CD8-positive, alpha-beta T cell (primary cell): ENCODE measurements at regions of chr6 and their contacts with region 1.

Region 1: GRCh38 chr6:149761438-149761837 is 11.9 kb downstream of the PCMT1 start:
- DNase-seq: no peak
- ATAC-seq: no peak
- H3K4me3 ChIP-seq: no peak overlapping the region
- H3K4me3 Mint-ChIP-seq: no peak overlapping the region
- H3K27ac ChIP-seq: no peak overlapping the region
- H3K27ac Mint-ChIP-seq: no peak overlapping the region
- H3K4me1 ChIP-seq: no peaks in the 10 kb centered on the region
- H3K4me1 Mint-ChIP-seq: peaks cover 27% of the 10 kb centered on the region
- H3K27me3 ChIP-seq: no peaks in the 10 kb centered on the region
- H3K27me3 Mint-ChIP-seq: no peaks in the 10 kb centered on the region
- CTCF ChIP-seq: no peak

Region 2: DNA sequence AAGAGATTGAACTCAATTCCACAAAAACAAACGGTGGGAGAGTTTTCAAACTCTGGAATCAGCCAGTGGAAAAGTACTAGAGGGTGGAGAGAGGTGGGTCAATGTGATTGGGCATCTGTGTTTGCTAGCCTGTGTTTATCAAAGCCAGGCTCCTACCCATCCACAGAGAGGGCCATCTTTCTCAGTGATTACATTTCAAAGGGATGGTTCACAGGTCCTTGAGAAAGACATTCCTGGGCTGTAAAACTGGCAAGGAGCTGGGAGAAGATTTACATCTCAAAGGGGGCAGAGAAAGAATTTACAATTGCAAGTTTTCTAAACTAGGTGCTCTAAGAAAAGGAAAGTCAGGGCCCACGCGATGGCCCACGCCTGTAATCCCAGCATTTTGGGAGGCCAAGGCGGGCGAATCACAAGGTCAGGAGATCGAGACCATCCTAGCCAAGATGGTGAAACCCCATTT is 1161.4 kb before region 1 on chr6:
- CTCF ChIA-PET with region 1: no interaction called
- POLR2A ChIA-PET with region 1: no interaction called
- intact Hi-C with region 1: no loop called
- DNase-seq: no peak
- ATAC-seq: no peak
- H3K4me3 ChIP-seq: no peak overlapping the region
- H3K4me3 Mint-ChIP-seq: no peak overlapping the region
- H3K27ac ChIP-seq: no peak overlapping the region
- H3K27ac Mint-ChIP-seq: no peak overlapping the region
- H3K4me1 ChIP-seq: no peaks in the 10 kb centered on the region
- H3K4me1 Mint-ChIP-seq: no peaks in the 10 kb centered on the region
- H3K27me3 ChIP-seq: no peaks in the 10 kb centered on the region
- H3K27me3 Mint-ChIP-seq: peaks cover 6% of the 10 kb centered on the region
- CTCF ChIP-seq: no peak

Region 3: GRCh38 chr6:149725785-149726184 is 35.7 kb before region 1 on chr6:
- CTCF ChIA-PET with region 1: no interaction called
- POLR2A ChIA-PET with region 1: no interaction called
- intact Hi-C with region 1: no loop called
- DNase-seq: no peak
- ATAC-seq: no peak
- H3K4me3 ChIP-seq: no peak overlapping the region
- H3K4me3 Mint-ChIP-seq: no peak overlapping the region
- H3K27ac ChIP-seq: no peak overlapping the region
- H3K27ac Mint-ChIP-seq: no peak overlapping the region
- H3K4me1 ChIP-seq: peaks cover 14% of the 10 kb centered on the region
- H3K4me1 Mint-ChIP-seq: peaks cover 18% of the 10 kb centered on the region
- H3K27me3 ChIP-seq: no peaks in the 10 kb centered on the region
- H3K27me3 Mint-ChIP-seq: no peaks in the 10 kb centered on the region
- CTCF ChIP-seq: no peak

Region 4: DNA sequence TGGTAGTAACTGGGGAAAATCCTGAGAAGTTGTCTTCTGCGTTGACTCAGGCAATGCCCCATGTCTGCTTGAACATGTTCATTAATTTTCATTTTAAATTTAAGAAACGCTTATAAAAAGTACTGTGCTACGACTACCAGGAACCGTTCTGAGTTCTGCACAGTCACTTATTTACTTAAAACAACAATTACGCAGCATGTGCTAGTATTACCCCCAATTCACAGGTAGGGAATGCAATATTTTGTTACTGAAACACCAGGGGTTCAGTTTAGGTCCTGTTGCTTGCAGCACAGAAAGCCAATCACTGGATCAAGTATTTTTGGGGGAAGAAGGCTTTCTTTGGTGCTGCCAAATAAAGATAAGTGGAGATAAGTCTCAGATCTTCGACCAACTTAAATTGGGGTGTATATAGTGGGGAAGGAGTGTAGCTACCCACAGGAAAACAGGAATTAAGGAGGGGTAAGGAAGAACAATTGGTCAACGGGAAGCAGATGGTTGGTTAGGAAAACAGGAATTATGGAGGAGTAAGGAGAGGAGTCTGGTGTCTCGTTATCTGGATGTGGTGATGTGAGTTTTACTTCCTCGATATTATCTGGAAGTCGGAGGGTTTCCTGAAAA is 107.9 kb after region 1 on chr6:
- CTCF ChIA-PET with region 1: no interaction called
- POLR2A ChIA-PET with region 1: no interaction called
- intact Hi-C with region 1: loop called in 1 of 2 experiments (anchors 5 kb)
- DNase-seq: no peak
- ATAC-seq: no peak
- H3K4me3 ChIP-seq: no peak overlapping the region
- H3K4me3 Mint-ChIP-seq: no peak overlapping the region
- H3K27ac ChIP-seq: no peak overlapping the region
- H3K27ac Mint-ChIP-seq: no peak overlapping the region
- H3K4me1 ChIP-seq: peaks cover 5% of the 10 kb centered on the region
- H3K4me1 Mint-ChIP-seq: peaks cover 5% of the 10 kb centered on the region
- H3K27me3 ChIP-seq: peaks cover 0 to 3% of the 10 kb centered on the region in 2 experiments
- H3K27me3 Mint-ChIP-seq: peaks cover 13% of the 10 kb centered on the region
- CTCF ChIP-seq: no peak